ENCODE measurements at regions of chr4 and their contacts with region 1.

Region 1: GRCh38 chr4:99808260-99808857 is 8.3 kb upstream of the DAPP1 start:
- DNase-seq: peak; percentile 75
- H3K4me3 Mint-ChIP-seq: no peak overlapping the region
- H3K27ac Mint-ChIP-seq: no peak overlapping the region
- H3K4me1 Mint-ChIP-seq: peaks cover 5% of the 10 kb centered on the region
- H3K27me3 Mint-ChIP-seq: no peaks in the 10 kb centered on the region
- CTCF ChIP-seq: peak; percentile 83

Region 2: GRCh38 chr4:99300934-99301333 is 507.4 kb before region 1 on chr4:
- CTCF ChIA-PET with region 1: no interaction called
- POLR2A ChIA-PET with region 1: no interaction called
- intact Hi-C with region 1: no loop called
- DNase-seq: peak; percentile 94
- H3K4me3 Mint-ChIP-seq: no peak overlapping the region
- H3K27ac Mint-ChIP-seq: peak overlapping the region; percentile 84
- H3K4me1 Mint-ChIP-seq: peaks cover 17% of the 10 kb centered on the region
- H3K27me3 Mint-ChIP-seq: no peaks in the 10 kb centered on the region
- CTCF ChIP-seq: no peak

Region 3: GRCh38 chr4:99405433-99406115 is 402.8 kb before region 1 on chr4:
- CTCF ChIA-PET with region 1: interaction called, 3 read pairs
- POLR2A ChIA-PET with region 1: no interaction called
- intact Hi-C with region 1: loop called (anchors 5 kb)
- DNase-seq: peak; percentile 84
- H3K4me3 Mint-ChIP-seq: no peak overlapping the region
- H3K27ac Mint-ChIP-seq: peak overlapping the region; percentile 76
- H3K4me1 Mint-ChIP-seq: peaks cover 16% of the 10 kb centered on the region
- H3K27me3 Mint-ChIP-seq: no peaks in the 10 kb centered on the region
- CTCF ChIP-seq: peak; percentile 96

Region 4: GRCh38 chr4:99552872-99553271 is 255.5 kb before region 1 on chr4:
- CTCF ChIA-PET with region 1: interaction called, 17 read pairs
- POLR2A ChIA-PET with region 1: no interaction called
- intact Hi-C with region 1: no loop called
- DNase-seq: no peak
- H3K4me3 Mint-ChIP-seq: no peak overlapping the region
- H3K27ac Mint-ChIP-seq: no peak overlapping the region
- H3K4me1 Mint-ChIP-seq: no peaks in the 10 kb centered on the region
- H3K27me3 Mint-ChIP-seq: no peaks in the 10 kb centered on the region
- CTCF ChIP-seq: no peak

Region 5: DNA sequence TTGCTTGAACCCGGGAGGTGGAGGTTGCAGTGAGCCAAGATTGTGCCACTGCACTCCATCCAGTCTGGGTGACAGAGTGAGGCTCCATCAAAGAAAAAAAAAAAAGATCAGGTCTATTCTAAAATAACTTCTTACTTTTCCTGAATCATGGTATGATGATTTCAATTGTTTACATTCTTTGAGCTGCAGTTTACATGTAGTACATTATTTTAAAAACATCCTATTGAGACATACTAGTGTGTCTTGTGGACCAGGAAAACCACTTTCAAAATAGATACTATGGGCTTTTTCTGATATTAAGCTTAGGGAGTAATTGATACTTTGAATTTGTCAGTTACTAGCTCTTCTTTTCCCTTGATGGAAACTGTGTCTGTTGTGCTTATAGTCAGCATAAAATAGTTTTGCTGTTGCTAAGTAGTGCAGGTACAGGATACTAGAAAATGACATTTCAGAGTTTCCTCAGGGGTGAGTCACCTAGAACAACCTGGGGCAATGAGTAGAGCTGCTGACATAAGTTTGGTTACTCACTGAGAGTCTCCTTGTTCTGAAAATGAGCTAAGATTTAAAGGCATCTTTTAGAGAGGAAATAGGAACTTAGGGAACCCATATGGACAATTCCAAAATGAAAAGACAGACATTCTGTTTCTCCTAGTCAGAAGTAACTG is 97.5 kb before region 1 on chr4:
- CTCF ChIA-PET with region 1: interaction called, 30 read pairs
- POLR2A ChIA-PET with region 1: interaction called, 3 read pairs
- intact Hi-C with region 1: no loop called
- DNase-seq: peak; percentile 82
- H3K4me3 Mint-ChIP-seq: no peak overlapping the region
- H3K27ac Mint-ChIP-seq: peak overlapping the region; percentile 24
- H3K4me1 Mint-ChIP-seq: peaks cover 14% of the 10 kb centered on the region
- H3K27me3 Mint-ChIP-seq: no peaks in the 10 kb centered on the region
- CTCF ChIP-seq: no peak

Region 6: DNA sequence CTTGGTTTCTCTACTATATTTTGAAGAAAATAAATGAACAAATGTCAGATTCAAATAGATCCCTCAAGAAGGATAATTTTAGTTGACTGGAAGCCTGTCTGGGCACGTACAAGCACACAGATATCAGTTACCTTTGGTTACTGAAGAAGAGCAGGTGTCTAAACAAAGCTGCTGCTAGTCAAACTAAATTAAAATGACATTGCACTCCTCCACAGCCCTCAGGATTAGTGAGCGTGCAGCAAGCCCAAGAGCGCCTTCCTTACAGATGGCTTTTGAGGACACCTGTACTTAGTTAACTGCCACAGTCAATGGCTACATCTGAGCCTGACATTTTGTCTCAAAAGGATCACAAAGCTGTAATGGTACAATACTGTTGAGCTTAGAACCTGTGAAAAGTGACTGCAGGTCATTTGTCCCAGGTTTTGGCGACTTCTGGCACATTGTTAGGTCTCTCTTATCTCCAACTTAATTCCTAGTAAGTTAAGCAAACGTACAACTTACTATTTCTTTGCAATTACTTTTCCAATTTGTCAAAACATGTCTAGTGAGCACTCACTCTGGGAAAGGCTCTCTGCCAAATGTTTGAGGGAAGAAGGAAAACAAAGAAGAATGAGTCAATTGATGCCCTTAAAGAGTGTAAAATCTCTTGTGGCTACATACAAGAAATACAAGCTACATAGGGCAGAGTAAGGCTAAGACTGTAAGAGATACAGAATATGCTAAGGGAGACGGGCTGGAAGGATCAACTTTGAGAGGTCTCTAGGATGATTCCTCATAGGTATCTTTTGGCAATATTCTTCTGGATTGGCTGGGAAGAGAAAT is 17.4 kb before region 1 on chr4:
- CTCF ChIA-PET with region 1: interaction called, 29 read pairs
- POLR2A ChIA-PET with region 1: interaction called, 4 read pairs
- intact Hi-C with region 1: no loop called
- DNase-seq: peak; percentile 67
- H3K4me3 Mint-ChIP-seq: no peak overlapping the region
- H3K27ac Mint-ChIP-seq: peak overlapping the region; percentile 11
- H3K4me1 Mint-ChIP-seq: peaks cover 18% of the 10 kb centered on the region
- H3K27me3 Mint-ChIP-seq: no peaks in the 10 kb centered on the region
- CTCF ChIP-seq: no peak

Region 7: GRCh38 chr4:99847362-99847976 is 39.1 kb after region 1 on chr4:
- CTCF ChIA-PET with region 1: no interaction called
- POLR2A ChIA-PET with region 1: no interaction called
- intact Hi-C with region 1: no loop called
- DNase-seq: no peak
- H3K4me3 Mint-ChIP-seq: no peak overlapping the region
- H3K27ac Mint-ChIP-seq: no peak overlapping the region
- H3K4me1 Mint-ChIP-seq: no peaks in the 10 kb centered on the region
- H3K27me3 Mint-ChIP-seq: no peaks in the 10 kb centered on the region
- CTCF ChIP-seq: no peak

Region 8: GRCh38 chr4:99885063-99885664 is 76.8 kb after region 1 on chr4:
- CTCF ChIA-PET with region 1: interaction called, 24 read pairs
- POLR2A ChIA-PET with region 1: no interaction called
- intact Hi-C with region 1: loop called (anchors 1 kb)
- DNase-seq: peak; percentile 64
- H3K4me3 Mint-ChIP-seq: no peak overlapping the region
- H3K27ac Mint-ChIP-seq: no peak overlapping the region
- H3K4me1 Mint-ChIP-seq: peaks cover 5% of the 10 kb centered on the region
- H3K27me3 Mint-ChIP-seq: no peaks in the 10 kb centered on the region
- CTCF ChIP-seq: peak; percentile 39